Activated T-helper 1 cell treated with anti-CD3 and anti-CD28 coated beads, Interleukin-12 subunit alpha, Interleukin-12 subunit beta, Interleukin-2, Interleukin-4 antibody, amounts not matched to agents 30 ng/mL and 10 ng/mL and 1 ng/mL, durations not matched to agents 14 hours and 24 hours and 36 hours (primary cell): ENCODE measurements at regions of chr1 and their contacts with region 1.

Region 1: GRCh38 chr1:119008483-119009311 is 20.6 kb upstream of the TBX15 start:
- DNase-seq: no peak
- H3K4me3 Mint-ChIP-seq: peak overlapping the region; percentile 6
- H3K27ac Mint-ChIP-seq: peak overlapping the region; percentile 71
- H3K4me1 Mint-ChIP-seq: peaks cover 8% of the 10 kb centered on the region
- H3K27me3 Mint-ChIP-seq: peaks cover 44% of the 10 kb centered on the region

Region 2: DNA sequence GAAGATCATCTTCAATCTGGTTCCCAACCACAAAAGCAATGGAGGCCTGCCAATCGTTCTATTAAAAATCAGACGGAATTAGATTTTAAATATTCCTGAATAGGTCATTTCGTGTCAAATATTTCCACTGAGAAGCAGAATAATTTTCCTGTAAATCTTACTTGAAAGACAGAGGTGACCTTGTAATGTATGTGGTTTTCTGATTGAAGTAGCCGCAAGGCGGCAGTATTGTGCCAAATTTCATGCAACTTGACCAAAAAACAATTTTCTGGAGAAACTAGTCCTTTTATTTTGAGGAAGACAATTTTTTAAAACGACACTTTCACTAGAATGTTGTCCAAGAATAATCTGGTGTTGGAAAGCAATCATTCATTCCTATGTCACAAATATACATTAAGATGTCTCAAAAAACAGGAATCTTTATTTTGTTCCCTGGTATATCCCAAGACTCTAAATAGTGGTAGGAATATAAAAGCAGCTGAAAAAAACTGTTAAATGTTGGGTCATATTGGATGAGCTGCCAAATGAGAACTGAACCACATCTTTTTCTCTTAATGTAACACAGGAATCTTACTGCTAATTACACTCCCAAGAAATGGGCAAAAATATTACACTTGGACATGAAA is 857.3 kb before region 1 on chr1:
- intact Hi-C with region 1: loop called (anchors 1 kb)
- DNase-seq: no peak
- H3K4me3 Mint-ChIP-seq: no peak overlapping the region
- H3K27ac Mint-ChIP-seq: no peak overlapping the region
- H3K4me1 Mint-ChIP-seq: no peaks in the 10 kb centered on the region
- H3K27me3 Mint-ChIP-seq: no peaks in the 10 kb centered on the region

Region 3: DNA sequence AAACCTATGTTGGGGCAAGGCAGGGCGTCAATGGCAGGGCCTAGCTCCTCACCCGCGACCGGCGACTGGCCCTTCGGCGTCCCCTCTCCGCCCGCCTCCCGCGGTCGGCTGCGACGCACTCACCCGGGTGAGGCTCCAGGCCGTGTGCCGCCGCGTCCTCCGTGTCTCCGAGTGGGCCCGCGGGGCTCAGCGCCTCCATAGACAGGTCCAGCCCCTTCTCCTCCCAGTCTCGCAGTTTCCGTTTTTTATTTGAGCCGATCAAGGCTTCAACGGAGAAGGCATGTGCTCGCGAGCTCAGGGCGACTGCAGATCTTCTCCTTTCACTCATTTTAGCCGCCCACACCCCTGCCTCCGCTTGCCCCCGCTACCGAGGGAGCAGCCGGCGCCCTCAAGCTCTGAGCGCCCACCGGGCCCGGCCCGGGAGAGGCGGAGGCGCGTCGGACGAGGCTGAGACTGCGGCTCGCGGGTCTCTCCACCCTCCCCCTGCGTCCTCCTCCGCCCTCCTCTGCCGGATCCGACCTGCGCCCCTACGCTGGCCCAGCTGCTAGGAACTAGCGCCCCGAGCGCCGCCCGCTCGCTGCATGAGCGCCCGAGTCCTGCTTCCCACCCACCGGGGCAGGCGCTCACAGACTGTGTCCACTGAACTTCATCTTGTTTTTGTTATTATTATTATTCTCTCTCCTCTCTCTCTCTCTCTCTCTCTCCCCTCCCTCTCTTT is 21.1 kb before region 1 on chr1:
- intact Hi-C with region 1: loop called (anchors 1 kb)
- DNase-seq: no peak
- H3K4me3 Mint-ChIP-seq: no peak overlapping the region
- H3K27ac Mint-ChIP-seq: no peak overlapping the region
- H3K4me1 Mint-ChIP-seq: peaks cover 6% of the 10 kb centered on the region
- H3K27me3 Mint-ChIP-seq: peaks cover 89% of the 10 kb centered on the region

Region 4: DNA sequence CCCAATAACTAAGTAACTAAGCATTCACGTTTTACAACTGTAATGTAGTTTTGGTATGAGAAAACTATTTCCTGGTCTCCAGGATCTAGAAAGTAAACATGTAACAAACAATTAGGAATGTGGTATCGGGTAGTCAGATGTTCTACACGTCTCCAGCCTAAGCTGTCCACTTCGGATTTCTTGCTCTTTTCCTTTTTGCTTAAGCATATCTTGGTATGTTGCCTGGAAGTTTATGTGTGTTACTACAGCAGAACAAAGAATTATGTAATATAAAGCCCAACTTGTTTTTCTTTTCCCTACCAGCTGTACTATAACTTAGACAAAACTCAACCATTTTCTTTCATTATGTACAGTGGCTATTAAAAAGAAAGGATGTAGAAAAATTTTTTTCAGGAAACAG is 152.2 kb after region 1 on chr1:
- intact Hi-C with region 1: no loop called
- DNase-seq: no peak
- H3K4me3 Mint-ChIP-seq: no peak overlapping the region
- H3K27ac Mint-ChIP-seq: no peak overlapping the region
- H3K4me1 Mint-ChIP-seq: no peaks in the 10 kb centered on the region
- H3K27me3 Mint-ChIP-seq: no peaks in the 10 kb centered on the region